Dorsolateral prefrontal cortex (tissue), 120 donors: ENCODE measurements at regions of chr3 and their contacts with region 1.

Region 1: GRCh38 chr3:155407971-155408370 is 114.5 kb upstream of the STRIT1 start:
- DNase-seq: no peak
- H3K4me3 ChIP-seq: no peak overlapping the region
- H3K27ac ChIP-seq: no peak overlapping the region
- H3K27me3 ChIP-seq: no peaks in the 10 kb centered on the region
- CTCF ChIP-seq: no peak

Region 2: GRCh38 chr3:155130001-155130400 is 278.0 kb before region 1 on chr3:
- intact Hi-C with region 1: no loop called
- DNase-seq: no peak
- H3K4me3 ChIP-seq: no peak overlapping the region
- H3K27ac ChIP-seq: no peak overlapping the region
- H3K27me3 ChIP-seq: peaks cover 0 to 7% (median 0%) of the 10 kb centered on the region in 45 donors
- CTCF ChIP-seq: no peak

Region 3: DNA sequence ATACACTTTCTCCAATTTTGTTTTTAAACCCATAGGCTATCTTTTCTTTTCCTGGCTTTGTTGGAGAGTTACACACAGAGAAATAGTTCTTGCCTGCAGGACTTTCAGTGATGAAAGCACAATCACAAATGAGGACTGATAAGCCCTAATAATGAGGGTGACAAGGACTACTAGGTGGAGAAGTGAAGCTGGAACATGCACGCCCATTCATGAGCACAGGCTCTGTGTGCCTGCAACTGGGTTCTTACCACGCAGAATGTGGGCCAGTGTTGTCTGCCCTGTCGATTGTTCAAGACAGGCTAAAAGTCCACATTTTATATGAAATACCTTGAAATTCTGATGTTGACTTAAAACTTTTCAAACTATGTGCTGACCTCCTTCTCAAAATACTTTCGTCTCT is 47.8 kb after region 1 on chr3:
- intact Hi-C with region 1: loop called in 1 of 2 experiments (anchors 2 kb)
- DNase-seq: no peak
- H3K4me3 ChIP-seq: no peak overlapping the region
- H3K27ac ChIP-seq: no peak overlapping the region
- H3K27me3 ChIP-seq: peaks cover 0 to 9% (median 0%) of the 10 kb centered on the region in 45 donors
- CTCF ChIP-seq: no peak